Right ventricle myocardium inferior (tissue), 1 donor: ENCODE measurements at regions of chr2 and their contacts with region 1.

Region 1: GRCh38 chr2:172931918-172932520 is 143.6 kb upstream of the MAP3K20 start:
- DNase-seq: no peak
- ATAC-seq: no peak

Region 2: DNA sequence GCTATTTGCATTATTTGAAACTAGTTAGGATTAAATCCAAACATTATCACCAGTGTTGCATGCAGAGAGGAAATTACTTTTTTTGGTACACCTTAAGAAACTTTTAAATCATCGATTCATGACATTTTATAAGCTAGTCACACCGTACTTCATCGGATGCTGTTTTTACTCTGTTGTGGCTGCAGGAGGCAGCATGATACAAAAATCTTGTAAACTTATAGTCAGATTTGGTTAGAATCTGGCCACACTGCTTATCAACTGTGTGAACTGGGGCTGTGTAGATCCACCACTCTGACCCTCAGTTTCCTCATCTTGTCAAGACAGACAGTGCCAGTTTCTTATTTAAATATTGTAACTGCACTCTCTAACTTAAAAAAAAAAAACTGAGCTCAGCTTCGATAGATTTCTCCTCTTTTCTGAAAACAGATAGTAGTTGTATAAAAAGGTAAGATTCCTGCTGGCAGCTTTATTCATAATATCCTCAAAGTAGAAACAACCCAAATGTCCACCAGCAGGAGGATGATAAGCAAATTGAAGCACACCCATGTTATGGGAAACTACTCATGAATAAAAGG is 118.6 kb before region 1 on chr2:
- intact Hi-C with region 1: loop called (anchors 2 kb)
- DNase-seq: no peak
- ATAC-seq: peak; percentile 42

Region 3: GRCh38 chr2:172864182-172864581 is 67.8 kb before region 1 on chr2:
- intact Hi-C with region 1: loop called (anchors 1 kb)
- DNase-seq: no peak
- ATAC-seq: peak; percentile 66

Region 4: DNA sequence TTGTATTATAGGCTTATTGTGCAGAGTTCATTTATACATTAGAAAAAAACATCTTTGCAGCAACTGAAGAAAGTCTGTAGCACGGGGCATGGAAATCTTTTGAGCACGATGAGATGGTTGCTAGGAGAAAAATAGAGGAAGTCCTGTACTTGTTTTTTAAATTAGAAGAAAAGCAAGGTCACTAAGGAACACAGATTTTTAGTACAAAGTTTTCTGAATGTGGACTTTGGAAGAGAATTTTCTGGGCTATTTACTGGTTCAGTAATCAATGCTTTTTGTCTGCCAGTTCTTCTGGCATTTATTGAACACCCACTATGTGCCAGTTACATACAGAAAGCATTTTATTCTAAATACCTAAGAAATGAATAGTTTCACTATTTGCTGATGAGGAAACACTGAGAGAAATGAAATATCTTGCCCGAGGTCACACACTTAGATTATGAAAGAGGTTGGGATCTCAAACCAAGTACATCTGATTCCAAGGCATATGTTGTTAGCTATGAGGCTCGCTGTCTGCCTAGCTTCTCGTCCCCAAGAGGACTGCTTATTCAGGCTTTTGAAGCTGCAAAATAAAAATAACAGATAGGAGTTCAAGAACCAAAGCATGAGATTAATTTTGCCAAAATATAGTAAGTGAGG is 128.0 kb after region 1 on chr2:
- intact Hi-C with region 1: no loop called
- DNase-seq: no peak
- ATAC-seq: peak; percentile 50